Caco-2 (cell line): ENCODE measurements at regions of chr15 and their contacts with region 1.

Region 1: DNA sequence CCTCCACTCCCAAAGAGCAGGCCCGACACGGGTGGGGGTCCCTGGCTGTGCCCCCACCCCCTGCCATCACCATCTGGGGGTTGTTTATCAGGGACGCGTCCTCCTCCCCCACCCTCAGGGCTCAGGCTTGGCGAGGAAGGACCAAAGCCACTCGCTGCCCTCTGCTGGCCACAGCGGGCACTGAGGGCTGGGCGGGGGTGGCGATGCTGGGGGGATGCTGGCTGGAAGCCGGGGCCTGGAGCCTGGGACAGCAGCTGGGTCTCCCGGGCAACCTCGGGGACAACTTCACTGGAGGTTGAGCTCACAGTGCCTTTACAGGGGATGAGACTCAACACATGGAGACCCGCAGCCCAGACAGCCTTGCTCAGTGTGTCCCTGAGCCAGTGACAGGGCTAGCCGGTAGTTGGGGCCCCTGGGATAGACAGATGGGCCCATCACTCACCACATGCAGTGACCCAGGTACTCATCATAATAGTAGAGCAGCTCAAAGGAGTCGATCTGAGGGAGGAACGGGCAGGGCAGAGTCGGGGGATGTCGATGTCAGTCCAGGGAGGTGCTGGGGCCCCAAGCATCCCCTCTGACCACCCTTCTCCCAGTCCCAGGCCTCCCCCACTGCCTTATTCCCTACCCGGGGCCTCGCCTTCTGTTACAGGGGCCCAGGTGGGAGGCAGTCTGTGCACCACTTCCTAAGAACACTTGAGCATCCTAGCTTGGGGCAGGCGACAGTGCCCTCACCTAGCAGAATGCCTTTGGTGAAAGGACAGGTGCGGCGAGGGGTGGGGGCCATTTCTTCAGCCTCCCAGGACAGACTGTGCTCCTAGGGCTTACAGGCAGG is 5.9 kb upstream of the CALML4 start:
- DNase-seq: peak; percentile 51 to 74
- H3K4me3 ChIP-seq: no peak overlapping the region
- H3K4me3 Mint-ChIP-seq: no peak overlapping the region
- H3K27ac Mint-ChIP-seq: no peak overlapping the region
- H3K4me1 ChIP-seq: peaks cover 4% of the 10 kb centered on the region
- H3K4me1 Mint-ChIP-seq: peaks cover 11% of the 10 kb centered on the region
- H3K27me3 ChIP-seq: no peaks in the 10 kb centered on the region
- H3K27me3 Mint-ChIP-seq: no peaks in the 10 kb centered on the region
- CTCF ChIP-seq: peak; percentile 71 to 77

Region 2: GRCh38 chr15:68177742-68178141 is 33.3 kb before region 1 on chr15:
- CTCF ChIA-PET with region 1: no interaction called
- POLR2A ChIA-PET with region 1: no interaction called
- intact Hi-C with region 1: no loop called
- DNase-seq: no peak
- H3K4me3 ChIP-seq: no peak overlapping the region
- H3K4me3 Mint-ChIP-seq: no peak overlapping the region
- H3K27ac Mint-ChIP-seq: no peak overlapping the region
- H3K4me1 ChIP-seq: no peaks in the 10 kb centered on the region
- H3K4me1 Mint-ChIP-seq: no peaks in the 10 kb centered on the region
- H3K27me3 ChIP-seq: no peaks in the 10 kb centered on the region
- H3K27me3 Mint-ChIP-seq: no peaks in the 10 kb centered on the region
- CTCF ChIP-seq: no peak

Region 3: DNA sequence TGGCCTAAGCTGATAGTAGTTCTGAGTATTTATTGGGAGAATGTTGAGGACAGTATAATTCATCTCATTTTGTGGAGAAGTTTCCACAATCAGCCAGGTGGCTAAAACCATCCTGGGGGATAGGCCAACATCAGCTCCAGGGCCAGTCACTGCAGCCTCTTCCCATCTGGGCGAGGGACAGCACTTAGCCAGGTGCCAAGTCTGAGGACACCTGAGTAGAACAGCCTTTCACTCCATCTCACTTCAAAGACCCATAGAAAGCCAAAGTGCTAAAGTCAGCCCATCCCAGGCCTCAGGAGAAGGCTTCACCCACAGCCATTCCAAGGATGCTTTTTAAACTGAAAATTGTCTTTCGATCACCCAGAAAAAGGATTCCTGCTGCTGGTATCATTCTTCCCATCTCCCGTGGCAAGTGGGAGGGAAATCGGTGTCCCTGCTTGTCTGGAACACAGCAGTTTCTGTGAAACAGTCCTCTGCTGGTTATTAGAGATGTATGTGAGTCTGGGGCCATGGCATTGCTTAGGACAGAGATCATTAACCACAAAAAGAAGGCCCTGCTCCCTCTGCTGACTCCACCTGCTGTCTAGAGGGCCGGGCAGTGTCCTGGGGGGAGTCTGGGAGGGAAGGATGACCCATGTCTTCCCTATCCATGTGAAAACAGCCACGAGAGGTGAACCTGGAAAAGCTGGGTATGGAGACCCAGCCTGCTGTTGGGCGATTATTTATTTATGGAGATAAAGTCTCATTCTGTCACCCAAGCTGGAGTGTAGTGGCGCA is 15.5 kb before region 1 on chr15:
- CTCF ChIA-PET with region 1: interaction called, 9 read pairs
- POLR2A ChIA-PET with region 1: no interaction called
- intact Hi-C with region 1: loop called (anchors 2 kb)
- DNase-seq: no peak
- H3K4me3 ChIP-seq: no peak overlapping the region
- H3K4me3 Mint-ChIP-seq: no peak overlapping the region
- H3K27ac Mint-ChIP-seq: peak overlapping the region; percentile 63
- H3K4me1 ChIP-seq: no peaks in the 10 kb centered on the region
- H3K4me1 Mint-ChIP-seq: peaks cover 8% of the 10 kb centered on the region
- H3K27me3 ChIP-seq: no peaks in the 10 kb centered on the region
- H3K27me3 Mint-ChIP-seq: no peaks in the 10 kb centered on the region
- CTCF ChIP-seq: no peak